Right lobe of liver (tissue), 6 donors: ENCODE measurements at regions of chr9 and their contacts with region 1.

Region 1: DNA sequence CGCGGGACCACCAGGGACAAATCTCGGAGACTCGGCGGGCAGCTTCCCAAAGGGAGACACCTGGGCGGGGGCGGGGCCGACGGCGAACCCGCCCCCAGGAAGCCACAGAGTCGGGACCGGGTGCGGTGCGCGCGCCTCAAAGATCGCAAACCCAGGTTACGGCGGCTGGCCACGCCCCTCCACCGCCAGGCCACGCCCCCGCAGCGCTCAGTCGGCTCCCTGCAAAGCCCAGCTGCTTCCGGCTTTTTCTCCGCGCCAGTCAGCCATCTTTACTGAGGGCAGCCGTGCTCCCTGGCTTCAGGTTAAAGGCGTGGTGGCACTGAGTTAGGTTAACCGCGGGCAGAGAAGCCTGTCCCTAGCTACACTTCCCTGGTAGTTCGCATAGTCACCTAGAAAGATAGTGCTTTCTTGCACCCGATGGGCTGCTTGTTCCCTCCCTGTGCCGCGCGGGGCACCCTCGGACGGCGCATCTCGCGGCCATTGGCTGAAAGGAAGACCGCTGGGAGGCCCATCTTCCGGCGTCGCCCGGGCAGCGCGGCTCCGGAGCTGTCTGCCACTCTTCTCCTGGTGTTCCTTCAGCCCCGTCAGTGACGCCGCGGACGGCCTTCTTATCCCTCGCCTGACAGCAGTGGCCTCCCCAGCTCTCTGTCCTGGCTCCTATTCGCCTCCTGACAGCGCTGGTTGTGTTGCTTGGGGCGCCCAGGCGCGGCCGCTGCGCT is at the start of gene TBC1D2:
- DNase-seq: peak; percentile 97 to 99 (median 98)
- ATAC-seq: peak; percentile 95 to 98 (median 95)
- H3K4me3 ChIP-seq: peak within 1 kb of the TSS; percentile 70 to 96 (median 94)
- H3K27ac ChIP-seq: peak within 1 kb of the TSS; percentile 80 to 94 (median 94)
- H3K4me1 ChIP-seq: peaks cover 0 to 11% (median 5%) of the 10 kb centered on the region in 4 donors
- H3K27me3 ChIP-seq: no peaks in the 10 kb centered on the region
- CTCF ChIP-seq: peak in 2 of 4 donors; percentile 10 to 23
- POLR2A ChIP-seq: peak; percentile 60
- total RNA-seq, gene TBC1D2: 5.1 to 17.5 (median 9.7) TPM

Region 2: GRCh38 chr9:98074115-98074990 is 181.4 kb before region 1 on chr9:
- intact Hi-C with region 1: loop called in 1 of 2 experiments (anchors 10 kb)
- DNase-seq: peak in 2 of 3 donors; percentile 58 to 76
- ATAC-seq: peak; percentile 68 to 80 (median 70)
- H3K4me3 ChIP-seq: no peak overlapping the region
- H3K27ac ChIP-seq: peak overlapping the region in 2 of 3 donors; percentile 46 to 53
- H3K4me1 ChIP-seq: peaks cover 0 to 29% (median 10%) of the 10 kb centered on the region in 4 donors
- H3K27me3 ChIP-seq: no peaks in the 10 kb centered on the region
- CTCF ChIP-seq: peak; percentile 89 to 98 (median 98)
- POLR2A ChIP-seq: no peak

Region 3: DNA sequence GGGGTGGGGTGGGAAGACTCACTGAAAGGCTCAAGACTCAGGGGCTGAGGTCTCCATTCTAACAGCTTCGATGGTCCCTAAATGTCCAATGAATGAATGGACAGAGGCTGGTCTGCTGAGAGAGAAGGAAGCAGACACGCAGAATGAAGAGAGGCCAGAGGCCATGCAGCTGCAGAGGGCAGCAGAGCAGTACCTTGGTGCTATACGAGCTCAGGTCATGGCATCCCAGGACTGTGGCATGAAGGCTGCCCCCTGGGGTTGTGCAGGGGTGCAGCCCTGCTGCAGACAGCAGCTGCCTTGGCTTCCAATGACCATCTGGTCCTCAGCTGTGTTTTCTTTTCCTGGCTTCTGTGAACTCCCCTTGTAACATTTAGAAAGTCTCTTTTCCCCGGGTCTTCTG is 48.1 kb before region 1 on chr9:
- intact Hi-C with region 1: loop called in 1 of 2 experiments (anchors 5 kb)
- DNase-seq: no peak
- ATAC-seq: peak; percentile 19 to 50 (median 25)
- H3K4me3 ChIP-seq: no peak overlapping the region
- H3K27ac ChIP-seq: no peak overlapping the region
- H3K4me1 ChIP-seq: peaks cover 0 to 17% (median 0%) of the 10 kb centered on the region in 4 donors
- H3K27me3 ChIP-seq: no peaks in the 10 kb centered on the region
- CTCF ChIP-seq: peak in 3 of 4 donors; percentile 25 to 32 (median 30)
- POLR2A ChIP-seq: no peak

Region 4: DNA sequence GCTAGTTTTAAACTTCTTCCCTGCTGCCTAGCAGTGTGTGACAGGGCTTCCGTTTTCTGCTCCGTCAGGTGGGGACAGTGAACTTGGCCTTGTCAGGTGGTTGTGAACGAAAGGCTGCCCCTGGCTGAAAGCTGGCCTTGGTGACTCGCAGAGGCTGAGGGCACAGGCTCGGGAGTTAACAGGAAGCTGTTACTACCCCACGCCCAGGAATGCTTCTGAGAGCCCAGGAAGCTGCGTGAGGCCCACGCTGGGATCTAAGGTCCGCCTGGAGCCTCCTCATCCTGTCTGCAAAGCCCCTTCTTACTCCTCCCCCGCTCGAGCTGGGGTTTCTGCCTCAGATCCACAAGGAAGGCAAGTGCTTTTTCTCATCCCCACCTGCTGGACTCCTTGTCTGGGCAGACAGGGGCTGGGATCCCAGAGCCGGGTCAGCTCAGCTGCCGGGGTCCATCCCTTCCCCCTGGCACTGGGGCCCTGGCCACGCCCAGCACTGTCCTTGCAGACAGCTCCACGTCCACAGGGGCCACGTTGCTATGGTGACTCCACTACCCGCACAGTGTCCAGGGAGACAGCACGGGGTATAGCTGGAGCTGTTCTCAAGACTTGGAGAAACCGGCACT is 124.4 kb after region 1 on chr9:
- intact Hi-C with region 1: no loop called
- DNase-seq: no peak
- ATAC-seq: no peak
- H3K4me3 ChIP-seq: no peak overlapping the region
- H3K27ac ChIP-seq: no peak overlapping the region
- H3K4me1 ChIP-seq: no peaks in the 10 kb centered on the region
- H3K27me3 ChIP-seq: no peaks in the 10 kb centered on the region
- CTCF ChIP-seq: no peak
- POLR2A ChIP-seq: no peak